ENCODE measurements at regions of chr6 and their contacts with region 1.

Region 1: DNA sequence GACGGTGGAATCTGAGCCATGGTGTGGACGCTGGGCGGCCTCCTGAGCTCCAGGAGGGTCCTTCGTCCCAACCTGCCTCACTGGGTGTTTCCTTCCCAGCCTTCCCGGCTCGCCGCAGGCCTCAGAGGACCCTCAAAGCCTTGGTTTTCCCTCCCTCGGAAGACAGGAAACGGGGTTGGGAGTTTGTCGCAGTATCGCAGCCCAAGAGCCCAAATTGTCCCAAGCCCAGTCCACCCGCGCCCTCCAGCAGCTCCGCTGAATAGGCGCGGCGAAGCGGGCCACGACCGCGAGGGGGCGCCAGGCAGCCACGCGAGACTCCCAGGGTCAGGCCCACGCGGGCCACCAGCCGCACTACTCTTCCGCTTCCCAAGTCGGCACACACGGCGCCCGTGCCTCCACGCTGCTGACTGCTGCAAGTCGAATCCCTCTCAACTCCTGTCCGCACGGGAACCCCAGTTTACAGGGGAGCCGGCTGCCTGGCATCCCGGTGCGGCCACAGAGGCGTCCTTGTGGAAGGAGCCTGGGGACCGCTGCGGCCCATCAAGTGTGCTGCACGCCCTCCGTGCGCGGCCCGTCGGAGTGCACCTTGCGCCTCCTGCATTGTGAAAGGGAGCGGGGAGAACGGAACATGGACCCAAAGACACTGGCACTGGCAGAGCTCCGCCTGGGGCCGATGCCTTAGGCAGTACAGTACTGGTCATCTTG is 40.4 kb upstream of the HMGA1 start:
- DNase-seq: peak; percentile 81 to 89 (median 85)
- H3K4me3 ChIP-seq: peak overlapping the region; percentile 47 to 58
- H3K4me3 Mint-ChIP-seq: peak overlapping the region; percentile 79 to 89 (median 85)
- H3K27ac ChIP-seq: peak overlapping the region; percentile 48
- H3K27ac Mint-ChIP-seq: peak overlapping the region in 6 of 7 donors; percentile 42 to 78 (median 56)
- H3K4me1 ChIP-seq: peaks cover 9% of the 10 kb centered on the region
- H3K4me1 Mint-ChIP-seq: peaks cover 2 to 9% (median 5%) of the 10 kb centered on the region in 4 donors
- H3K27me3 ChIP-seq: no peaks in the 10 kb centered on the region
- H3K27me3 Mint-ChIP-seq: no peaks in the 10 kb centered on the region

Region 2: DNA sequence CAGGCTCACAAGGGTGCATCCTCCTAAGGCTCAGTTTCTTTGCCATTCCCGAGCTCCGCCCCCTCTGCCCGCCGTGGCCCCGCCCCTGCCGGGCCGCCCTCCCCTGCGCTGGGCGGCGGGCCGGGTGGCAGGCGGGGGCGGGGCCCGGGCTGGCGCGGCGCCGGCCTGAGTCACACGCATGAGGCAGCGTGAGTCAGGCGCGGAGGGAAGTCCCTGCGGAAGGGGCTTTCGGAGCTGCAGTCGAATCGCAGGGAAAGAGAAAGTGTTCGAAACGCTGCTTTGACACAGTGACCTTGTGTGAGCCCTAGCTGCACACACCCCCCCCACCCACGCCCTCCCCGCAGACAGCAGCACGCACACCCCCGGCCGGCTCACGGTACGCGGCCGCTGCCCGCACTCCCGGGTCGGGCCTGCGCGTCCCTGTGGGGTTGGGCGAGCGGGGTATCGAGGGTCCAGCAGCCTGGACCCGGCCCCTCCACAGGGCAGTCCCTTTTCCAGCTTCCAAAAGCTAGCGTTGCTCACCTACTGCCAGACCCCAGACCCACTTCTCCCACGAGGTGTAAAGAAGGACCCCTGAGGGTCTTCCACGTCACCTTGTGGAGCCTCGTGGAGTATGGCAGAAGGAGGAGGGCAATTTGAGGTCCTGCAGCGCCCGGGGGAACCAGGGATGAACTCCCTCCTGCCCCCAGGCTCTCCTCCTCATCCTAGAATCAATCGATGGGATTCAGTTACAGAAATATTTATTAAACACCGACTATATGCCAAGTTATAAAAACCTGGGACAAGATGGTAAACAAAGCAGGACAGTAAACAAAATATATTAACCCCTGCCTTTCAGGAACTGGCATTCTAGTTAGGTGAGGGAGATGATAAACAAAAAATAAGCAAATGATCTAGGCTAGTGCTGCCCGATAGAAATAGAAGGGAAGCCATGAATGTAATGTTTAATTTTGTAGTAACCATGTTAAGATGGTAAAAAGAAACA is 28.0 kb after region 1 on chr6:
- CTCF ChIA-PET with region 1: interaction called, 4 read pairs
- POLR2A ChIA-PET with region 1: interaction called, 9 read pairs
- intact Hi-C with region 1: loop called (anchors 2 kb)
- DNase-seq: peak; percentile 90 to 98 (median 94)
- H3K4me3 ChIP-seq: peak overlapping the region; percentile 77 to 86
- H3K4me3 Mint-ChIP-seq: peak overlapping the region; percentile 60 to 81 (median 74)
- H3K27ac ChIP-seq: peak overlapping the region; percentile 99
- H3K27ac Mint-ChIP-seq: peak overlapping the region; percentile 72 to 99 (median 96)
- H3K4me1 ChIP-seq: peaks cover 14% of the 10 kb centered on the region
- H3K4me1 Mint-ChIP-seq: peaks cover 4 to 13% (median 10%) of the 10 kb centered on the region in 4 donors
- H3K27me3 ChIP-seq: no peaks in the 10 kb centered on the region
- H3K27me3 Mint-ChIP-seq: no peaks in the 10 kb centered on the region

Region 3: DNA sequence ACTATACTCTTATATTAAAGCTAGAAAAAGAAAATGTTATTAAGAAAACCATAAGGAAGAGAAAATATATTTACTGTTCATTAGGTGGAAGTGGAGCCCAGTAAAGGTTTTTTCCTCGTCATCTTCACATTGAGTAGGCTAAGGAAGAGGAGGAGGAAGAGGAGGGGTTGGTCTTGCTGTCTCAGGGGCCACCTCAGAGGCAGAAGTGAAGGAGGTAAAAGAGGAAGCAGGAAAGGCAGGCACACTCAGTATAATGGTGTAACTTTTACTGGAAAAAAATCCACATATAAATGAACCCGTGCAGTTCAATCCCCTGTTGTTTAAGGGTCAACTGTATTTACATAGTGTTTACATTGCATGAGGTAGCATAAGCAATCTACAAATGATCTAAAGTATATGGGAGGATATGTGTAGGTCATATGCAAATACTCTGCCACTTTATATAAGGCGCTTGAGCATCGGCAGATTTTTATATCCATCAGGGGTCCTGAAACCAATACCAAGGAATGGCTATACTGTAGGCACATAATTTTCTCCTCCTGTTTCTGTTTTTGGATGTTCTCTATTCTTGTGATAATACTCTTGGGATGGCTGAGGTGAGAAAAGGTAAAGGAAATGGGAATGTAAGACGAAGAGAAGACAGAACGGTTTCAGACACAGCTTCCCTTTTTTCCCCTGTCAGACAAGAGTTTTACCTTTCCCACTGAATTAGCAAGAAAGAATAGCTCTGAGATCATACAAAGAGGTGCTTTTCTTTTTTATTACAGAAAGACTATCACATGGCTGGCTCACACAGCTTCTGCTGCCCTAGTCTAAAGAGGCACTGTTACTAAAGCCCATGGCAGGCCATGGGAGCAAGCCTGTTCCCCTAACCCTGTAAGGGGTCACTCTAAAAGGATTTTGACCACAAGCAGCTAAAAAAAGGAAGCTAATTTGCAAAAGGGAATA is 136.2 kb after region 1 on chr6:
- CTCF ChIA-PET with region 1: no interaction called
- POLR2A ChIA-PET with region 1: no interaction called
- intact Hi-C with region 1: no loop called
- DNase-seq: no peak
- H3K4me3 ChIP-seq: no peak overlapping the region
- H3K4me3 Mint-ChIP-seq: no peak overlapping the region
- H3K27ac ChIP-seq: no peak overlapping the region
- H3K27ac Mint-ChIP-seq: peak overlapping the region in 2 of 7 donors; percentile 59 to 73
- H3K4me1 ChIP-seq: peaks cover 1% of the 10 kb centered on the region
- H3K4me1 Mint-ChIP-seq: peaks cover 7 to 19% (median 16%) of the 10 kb centered on the region in 4 donors
- H3K27me3 ChIP-seq: no peaks in the 10 kb centered on the region
- H3K27me3 Mint-ChIP-seq: no peaks in the 10 kb centered on the region

Region 4: DNA sequence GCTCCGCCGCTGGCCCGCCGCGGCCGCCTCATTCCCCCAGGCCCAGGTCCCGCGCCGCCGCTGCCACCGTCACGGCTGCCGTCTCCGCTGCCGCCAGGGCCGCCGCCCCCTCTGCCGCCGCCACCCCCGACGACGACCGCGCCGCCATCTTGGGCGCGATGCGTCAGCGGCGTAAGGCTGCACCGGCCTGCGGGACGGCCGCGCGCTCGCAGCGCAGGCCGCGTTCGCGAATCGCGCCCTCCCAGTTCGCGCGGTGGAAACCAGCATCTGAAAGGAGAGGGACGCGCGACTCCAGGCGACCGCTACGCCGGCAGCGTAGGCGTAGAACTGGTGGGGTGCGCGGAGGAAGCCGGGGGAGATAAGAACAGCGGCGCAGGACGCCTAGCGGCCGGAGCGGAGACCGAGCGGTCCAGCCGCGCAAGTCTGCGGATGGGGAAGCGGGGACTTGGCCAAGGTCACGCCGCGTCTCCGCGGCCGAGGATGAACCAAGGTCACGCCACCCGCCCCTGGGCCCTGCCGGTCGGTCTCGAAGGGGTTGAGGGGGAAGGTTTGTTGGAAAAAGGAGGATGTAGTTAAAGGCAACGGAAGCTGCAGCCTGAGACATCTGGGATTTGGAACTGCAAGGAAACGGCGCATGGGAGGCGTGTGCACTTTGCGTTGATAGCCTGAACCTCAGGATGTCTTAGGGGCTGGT is 196.4 kb after region 1 on chr6 and contains the start of gene NUDT3:
- CTCF ChIA-PET with region 1: interaction called, 13 read pairs
- POLR2A ChIA-PET with region 1: interaction called, 4 read pairs
- intact Hi-C with region 1: loop called (anchors 2 kb)
- DNase-seq: peak; percentile 92 to 97 (median 93)
- H3K4me3 ChIP-seq: peak within 1 kb of the TSS; percentile 73 to 78
- H3K4me3 Mint-ChIP-seq: peak within 1 kb of the TSS in 7 of 8 donors; percentile 74 to 99 (median 95)
- H3K27ac ChIP-seq: peak within 1 kb of the TSS; percentile 89
- H3K27ac Mint-ChIP-seq: peak within 1 kb of the TSS in 6 of 7 donors; percentile 75 to 96 (median 95)
- H3K4me1 ChIP-seq: peaks cover 24% of the 10 kb centered on the region
- H3K4me1 Mint-ChIP-seq: peaks cover 13 to 27% (median 18%) of the 10 kb centered on the region in 4 donors
- H3K27me3 ChIP-seq: no peaks in the 10 kb centered on the region
- H3K27me3 Mint-ChIP-seq: no peaks in the 10 kb centered on the region
- total RNA-seq, gene NUDT3: 25.9 TPM

Region 5: DNA sequence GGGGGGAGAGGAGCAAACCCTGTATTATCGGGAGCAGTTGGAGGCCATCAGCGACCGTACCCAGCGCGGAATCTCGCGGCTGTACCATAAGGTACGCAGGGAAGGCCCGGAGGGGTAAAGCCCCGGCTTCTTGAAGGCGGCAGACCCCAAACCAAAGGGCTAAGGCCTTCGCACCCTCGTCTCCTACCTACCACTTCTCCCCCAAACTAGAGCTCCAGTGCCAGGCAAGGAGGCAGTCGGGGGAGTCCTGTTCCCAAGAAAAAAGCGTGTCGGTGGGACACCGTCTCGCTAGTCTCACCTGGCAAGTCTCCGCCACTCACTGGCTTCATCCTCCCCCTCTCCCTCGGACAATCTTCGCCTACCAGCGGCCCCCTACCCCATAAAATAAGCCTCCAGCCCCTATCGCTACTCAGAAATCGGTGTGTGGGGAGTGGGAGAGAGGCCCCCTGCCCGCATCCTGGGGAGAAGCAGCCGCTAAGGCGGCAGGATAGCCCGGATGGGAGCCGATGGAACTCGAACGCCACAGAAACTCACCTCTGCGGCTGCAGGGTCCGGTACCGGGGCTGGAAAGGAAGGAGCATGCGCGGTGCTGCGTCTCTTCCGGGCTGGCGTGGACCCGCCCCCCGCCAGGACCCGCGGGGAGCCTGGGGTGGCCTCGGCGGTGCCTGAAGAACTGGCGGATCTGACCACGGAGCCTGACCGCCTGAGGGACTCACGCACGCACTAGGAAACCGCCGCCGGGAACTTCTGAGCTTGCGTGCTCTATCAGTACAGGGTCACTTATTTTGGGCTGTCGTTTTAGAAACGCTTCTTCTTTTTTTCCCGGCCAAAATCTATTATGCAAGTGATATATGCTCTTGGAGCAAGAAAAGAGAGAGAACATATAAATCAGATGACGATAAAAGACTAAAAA is 229.5 kb after region 1 on chr6 and contains the start of gene RPS10:
- CTCF ChIA-PET with region 1: interaction called, 12 read pairs
- POLR2A ChIA-PET with region 1: no interaction called
- intact Hi-C with region 1: no loop called
- DNase-seq: peak; percentile 85 to 90 (median 87)
- H3K4me3 ChIP-seq: peak within 1 kb of the TSS; percentile 80 to 95
- H3K4me3 Mint-ChIP-seq: peak within 1 kb of the TSS; percentile 97 to 99 (median 98)
- H3K27ac ChIP-seq: peak within 1 kb of the TSS; percentile 94
- H3K27ac Mint-ChIP-seq: peak within 1 kb of the TSS; percentile 96 to 99 (median 97)
- H3K4me1 ChIP-seq: peaks cover 30% of the 10 kb centered on the region
- H3K4me1 Mint-ChIP-seq: peaks cover 16 to 42% (median 32%) of the 10 kb centered on the region in 4 donors
- H3K27me3 ChIP-seq: no peaks in the 10 kb centered on the region
- H3K27me3 Mint-ChIP-seq: no peaks in the 10 kb centered on the region
- total RNA-seq, gene RPS10: 2,689 to 2,757 TPM

Measured in CD4-positive, alpha-beta memory T cell (primary cell).